H1 (cell line): ENCODE measurements at regions of chr4 and their contacts with region 1.

Region 1: DNA sequence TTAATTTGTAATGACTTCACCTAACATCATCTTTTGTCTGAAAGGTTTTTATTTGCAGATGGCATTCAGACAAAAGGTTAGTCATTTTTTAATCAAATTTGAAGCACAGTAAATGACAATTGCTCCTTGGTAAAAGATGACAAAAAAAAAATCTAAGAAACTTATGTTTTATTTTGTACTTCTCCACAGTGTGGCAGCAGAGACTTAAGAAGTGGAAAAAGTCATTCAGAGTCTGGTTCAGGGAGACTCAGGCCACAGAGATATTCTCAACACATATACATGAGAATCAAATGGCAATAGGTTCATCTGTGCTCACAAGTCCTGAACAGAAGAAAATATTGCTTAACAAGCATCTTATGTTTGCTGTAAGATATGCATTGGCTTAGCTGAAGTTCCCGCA is 436.2 kb downstream of the KCNIP4 start:
- DNase-seq: no peak
- H3K4me3 ChIP-seq: no peak overlapping the region
- H3K27ac ChIP-seq: no peak overlapping the region
- H3K4me1 ChIP-seq: no peaks in the 10 kb centered on the region
- H3K27me3 ChIP-seq: no peaks in the 10 kb centered on the region
- CTCF ChIP-seq: peak in 2 of 3 experiments; percentile 38 to 69; a peak in 3 of 4 replicates
- EP300 ChIP-seq: no peak
- POLR2A ChIP-seq: no peak
- RAD21 ChIP-seq: peak; percentile 91 to 94

Region 2: DNA sequence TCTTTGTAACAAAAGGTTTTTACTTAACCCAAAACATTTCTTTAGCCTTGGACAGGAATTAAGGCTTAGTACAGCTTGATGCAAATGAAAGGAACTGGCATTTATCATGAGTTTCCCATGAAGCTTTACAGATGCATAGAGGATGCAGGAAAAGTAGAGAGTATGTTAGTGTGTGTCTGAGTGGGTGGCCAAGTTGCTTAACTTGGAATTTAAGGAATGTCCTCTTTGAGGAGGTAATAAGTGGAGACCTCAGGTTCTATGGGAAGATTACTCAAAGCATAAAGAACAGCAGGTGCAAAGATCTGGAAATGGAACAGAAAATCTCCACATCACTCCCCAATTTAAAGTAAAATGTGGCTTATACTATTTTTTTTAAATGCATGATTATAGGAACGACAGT is 21.7 kb before region 1 on chr4:
- CTCF ChIA-PET with region 1: interaction called, 16 read pairs
- POLR2A ChIA-PET with region 1: no interaction called
- DNase-seq: no peak
- H3K4me3 ChIP-seq: no peak overlapping the region
- H3K27ac ChIP-seq: no peak overlapping the region
- H3K4me1 ChIP-seq: no peaks in the 10 kb centered on the region
- H3K27me3 ChIP-seq: no peaks in the 10 kb centered on the region
- CTCF ChIP-seq: no peak
- EP300 ChIP-seq: no peak
- POLR2A ChIP-seq: no peak
- RAD21 ChIP-seq: no peak